CD8-positive, alpha-beta T cell (primary cell): ENCODE measurements at regions of chr7 and their contacts with region 1.

Region 1: GRCh38 chr7:35694781-35695472 is at the start of gene HERPUD2:
- DNase-seq: peak; percentile 85 to 96 (median 93)
- ATAC-seq: peak; percentile 80
- H3K4me3 ChIP-seq: peak within 1 kb of the TSS; percentile 93 to 100
- H3K4me3 Mint-ChIP-seq: peak within 1 kb of the TSS; percentile 87
- H3K27ac ChIP-seq: peak within 1 kb of the TSS; percentile 97 to 100
- H3K27ac Mint-ChIP-seq: peak within 1 kb of the TSS; percentile 100
- H3K4me1 ChIP-seq: peaks cover 33% of the 10 kb centered on the region
- H3K4me1 Mint-ChIP-seq: peaks cover 59% of the 10 kb centered on the region
- H3K27me3 ChIP-seq: no peaks in the 10 kb centered on the region
- H3K27me3 Mint-ChIP-seq: no peaks in the 10 kb centered on the region
- CTCF ChIP-seq: no peak
- total RNA-seq, gene HERPUD2: 123 to 134 TPM

Region 2: DNA sequence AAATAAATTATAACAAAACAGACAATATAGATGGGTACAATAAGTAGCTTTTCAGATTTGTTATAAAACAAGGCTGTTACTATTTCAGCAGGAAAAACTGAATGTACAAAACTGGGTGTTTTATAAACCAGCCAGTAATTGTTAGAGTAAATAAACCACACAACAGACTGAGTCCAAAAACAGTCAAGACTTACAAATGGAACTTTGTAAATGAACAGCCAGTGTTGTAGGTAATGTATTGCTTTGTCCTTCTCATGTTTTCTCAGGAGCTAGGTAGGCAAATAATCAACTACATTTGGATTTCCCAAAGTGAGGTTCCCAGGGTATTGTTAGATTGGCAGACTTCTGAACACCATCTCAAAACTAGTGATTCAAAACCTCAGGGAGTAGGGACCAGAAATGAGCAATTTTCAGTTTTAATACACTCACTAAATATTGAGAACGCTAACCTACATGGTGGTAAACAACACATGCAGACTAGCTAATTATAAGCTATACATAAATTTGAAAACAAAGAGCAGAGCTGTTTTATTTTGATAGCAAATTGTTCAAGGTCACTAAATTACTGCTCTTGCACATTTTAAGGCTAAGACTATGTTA is 36.2 kb before region 1 on chr7:
- CTCF ChIA-PET with region 1: no interaction called
- POLR2A ChIA-PET with region 1: no interaction called
- intact Hi-C with region 1: loop called in 1 of 2 experiments (anchors 5 kb)
- DNase-seq: no peak
- ATAC-seq: no peak
- H3K4me3 ChIP-seq: no peak overlapping the region
- H3K4me3 Mint-ChIP-seq: no peak overlapping the region
- H3K27ac ChIP-seq: peak overlapping the region in 1 of 2 experiments; percentile 17
- H3K27ac Mint-ChIP-seq: peak overlapping the region; percentile 79
- H3K4me1 ChIP-seq: peaks cover 3% of the 10 kb centered on the region
- H3K4me1 Mint-ChIP-seq: peaks cover 45% of the 10 kb centered on the region
- H3K27me3 ChIP-seq: no peaks in the 10 kb centered on the region
- H3K27me3 Mint-ChIP-seq: no peaks in the 10 kb centered on the region
- CTCF ChIP-seq: no peak

Region 3: DNA sequence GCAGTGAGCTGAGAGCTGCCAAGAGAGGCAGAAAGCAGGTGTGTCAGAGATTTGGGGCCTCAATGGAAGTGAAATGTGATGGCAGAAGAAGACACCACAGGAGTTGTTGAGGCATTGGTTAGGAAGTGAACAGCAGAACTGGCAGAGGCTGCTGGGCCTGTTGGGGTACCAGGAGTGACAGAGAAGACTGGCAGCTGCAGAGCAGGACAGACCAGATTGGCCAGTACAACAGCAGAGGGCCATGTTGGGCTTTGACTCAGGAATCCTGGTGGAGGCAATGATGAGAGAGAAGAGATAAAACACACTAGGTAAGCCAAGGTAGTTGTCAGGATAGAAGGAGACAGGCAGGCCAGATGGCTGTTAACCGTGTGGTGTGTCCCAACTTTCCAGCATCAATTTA is 19.9 kb after region 1 on chr7:
- CTCF ChIA-PET with region 1: interaction called, 31 read pairs
- POLR2A ChIA-PET with region 1: interaction called, 11 read pairs
- intact Hi-C with region 1: no loop called
- DNase-seq: peak in 1 of 9 experiments; percentile 35
- ATAC-seq: no peak
- H3K4me3 ChIP-seq: no peak overlapping the region
- H3K4me3 Mint-ChIP-seq: no peak overlapping the region
- H3K27ac ChIP-seq: no peak overlapping the region
- H3K27ac Mint-ChIP-seq: peak overlapping the region; percentile 2
- H3K4me1 ChIP-seq: peaks cover 8% of the 10 kb centered on the region
- H3K4me1 Mint-ChIP-seq: peaks cover 8% of the 10 kb centered on the region
- H3K27me3 ChIP-seq: no peaks in the 10 kb centered on the region
- H3K27me3 Mint-ChIP-seq: no peaks in the 10 kb centered on the region
- CTCF ChIP-seq: no peak

Region 4: GRCh38 chr7:36152756-36153570 is 458.0 kb after region 1 on chr7 and contains the start of gene EEPD1:
- CTCF ChIA-PET with region 1: no interaction called
- POLR2A ChIA-PET with region 1: no interaction called
- intact Hi-C with region 1: loop called (anchors 5 to 10 kb)
- DNase-seq: peak; percentile 98 to 100 (median 100)
- ATAC-seq: peak; percentile 94
- H3K4me3 ChIP-seq: peak within 1 kb of the TSS; percentile 60 to 73
- H3K4me3 Mint-ChIP-seq: peak within 1 kb of the TSS; percentile 87
- H3K27ac ChIP-seq: peak within 1 kb of the TSS; percentile 35 to 54
- H3K27ac Mint-ChIP-seq: peak within 1 kb of the TSS; percentile 25
- H3K4me1 ChIP-seq: peaks cover 12% of the 10 kb centered on the region
- H3K4me1 Mint-ChIP-seq: peaks cover 24% of the 10 kb centered on the region
- H3K27me3 ChIP-seq: no peaks in the 10 kb centered on the region
- H3K27me3 Mint-ChIP-seq: no peaks in the 10 kb centered on the region
- CTCF ChIP-seq: no peak
- total RNA-seq, gene EEPD1: 0.98 to 1.1 TPM

Region 5: DNA sequence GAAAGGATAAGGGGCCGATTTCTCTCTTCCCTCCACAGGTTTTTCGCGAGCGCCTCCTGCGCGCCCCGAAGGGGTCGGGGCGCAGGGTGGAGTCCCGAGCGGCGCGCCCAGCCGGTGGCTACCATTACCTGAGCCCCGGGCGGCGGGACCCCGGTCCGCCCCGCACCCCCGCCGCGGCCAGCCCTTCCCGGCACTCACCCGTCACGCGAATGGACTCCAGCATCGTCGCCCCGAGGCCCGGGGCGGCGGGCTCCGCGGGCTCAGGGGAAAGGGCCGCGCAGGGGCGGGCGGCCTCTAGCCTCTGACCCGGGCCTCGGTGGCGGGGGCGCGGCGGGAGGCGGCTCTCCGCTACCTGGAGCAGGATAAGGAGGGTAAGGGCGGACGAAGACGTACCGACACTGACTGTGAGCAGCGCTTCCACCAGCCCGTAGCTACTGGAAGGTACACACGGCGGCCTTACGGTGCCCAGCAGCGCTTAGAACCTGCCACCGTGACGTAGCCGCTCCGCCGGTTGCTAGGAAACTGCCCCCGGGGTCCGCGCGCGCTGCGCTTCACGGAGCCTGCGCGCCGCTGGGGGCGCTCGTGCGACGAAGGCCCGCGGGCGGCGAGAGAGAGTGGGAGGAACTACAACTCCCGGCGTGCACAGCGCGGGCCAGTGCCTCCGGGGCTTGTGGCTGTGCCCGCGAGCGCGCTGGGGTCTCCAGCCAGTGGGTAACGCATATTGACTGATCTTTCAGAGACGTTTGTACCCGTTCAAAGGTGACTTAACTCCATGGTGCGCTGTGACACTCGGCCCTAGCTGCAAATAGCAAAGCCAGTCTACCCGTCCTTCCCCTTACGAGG is 672.0 kb after region 1 on chr7:
- CTCF ChIA-PET with region 1: no interaction called
- POLR2A ChIA-PET with region 1: no interaction called
- intact Hi-C with region 1: loop called (anchors 10 kb)
- DNase-seq: peak; percentile 88 to 96 (median 92)
- ATAC-seq: peak; percentile 96
- H3K4me3 ChIP-seq: peak overlapping the region; percentile 65 to 73
- H3K4me3 Mint-ChIP-seq: peak overlapping the region; percentile 94
- H3K27ac ChIP-seq: peak overlapping the region; percentile 62 to 71
- H3K27ac Mint-ChIP-seq: peak overlapping the region; percentile 85
- H3K4me1 ChIP-seq: peaks cover 4% of the 10 kb centered on the region
- H3K4me1 Mint-ChIP-seq: peaks cover 6% of the 10 kb centered on the region
- H3K27me3 ChIP-seq: peaks cover 0 to 2% of the 10 kb centered on the region in 2 experiments
- H3K27me3 Mint-ChIP-seq: peaks cover 2% of the 10 kb centered on the region
- CTCF ChIP-seq: peak; percentile 91